A549 (cell line): ENCODE measurements at regions of chr19 and their contacts with region 1.

Region 1: GRCh38 chr19:50414864-50415660 is 3.7 kb upstream of the SPIB start:
- DNase-seq: peak; percentile 86 to 89
- ATAC-seq: peak; percentile 67 to 89
- H3K4me3 ChIP-seq: no peak overlapping the region
- H3K27ac ChIP-seq: no peak overlapping the region
- H3K4me1 ChIP-seq: no peaks in the 10 kb centered on the region
- CTCF ChIP-seq: peak; percentile 82
- EP300 ChIP-seq: no peak
- POLR2A ChIP-seq: no peak
- RAD21 ChIP-seq: peak; percentile 52 to 59; a peak in 4 of 5 replicates

Region 2: DNA sequence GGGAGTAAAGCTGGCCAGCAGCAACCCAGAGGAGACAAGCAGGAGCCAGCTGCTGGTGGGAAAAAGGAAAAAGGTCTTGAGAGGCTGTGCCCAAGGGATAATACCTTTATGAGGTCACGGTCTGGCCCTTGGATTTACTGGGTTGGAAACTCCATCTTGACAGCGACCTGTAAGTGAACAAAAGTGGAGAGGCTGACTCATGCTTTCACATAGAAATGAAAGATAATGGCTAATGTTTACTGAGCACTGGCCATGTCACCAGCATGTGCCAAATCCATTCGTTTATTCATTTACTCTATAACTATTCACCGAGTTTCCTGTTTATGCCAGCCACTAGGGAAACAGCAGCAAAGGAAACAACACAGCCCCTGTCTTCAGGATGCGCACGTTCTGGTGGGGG is 394.6 kb before region 1 on chr19:
- CTCF ChIA-PET with region 1: no interaction called
- POLR2A ChIA-PET with region 1: no interaction called
- DNase-seq: peak in 1 of 2 experiments; percentile 62
- ATAC-seq: no peak
- H3K4me3 ChIP-seq: no peak overlapping the region
- H3K27ac ChIP-seq: no peak overlapping the region
- H3K4me1 ChIP-seq: peaks cover 17% of the 10 kb centered on the region
- CTCF ChIP-seq: no peak
- EP300 ChIP-seq: no peak
- POLR2A ChIP-seq: no peak
- RAD21 ChIP-seq: no peak

Region 3: DNA sequence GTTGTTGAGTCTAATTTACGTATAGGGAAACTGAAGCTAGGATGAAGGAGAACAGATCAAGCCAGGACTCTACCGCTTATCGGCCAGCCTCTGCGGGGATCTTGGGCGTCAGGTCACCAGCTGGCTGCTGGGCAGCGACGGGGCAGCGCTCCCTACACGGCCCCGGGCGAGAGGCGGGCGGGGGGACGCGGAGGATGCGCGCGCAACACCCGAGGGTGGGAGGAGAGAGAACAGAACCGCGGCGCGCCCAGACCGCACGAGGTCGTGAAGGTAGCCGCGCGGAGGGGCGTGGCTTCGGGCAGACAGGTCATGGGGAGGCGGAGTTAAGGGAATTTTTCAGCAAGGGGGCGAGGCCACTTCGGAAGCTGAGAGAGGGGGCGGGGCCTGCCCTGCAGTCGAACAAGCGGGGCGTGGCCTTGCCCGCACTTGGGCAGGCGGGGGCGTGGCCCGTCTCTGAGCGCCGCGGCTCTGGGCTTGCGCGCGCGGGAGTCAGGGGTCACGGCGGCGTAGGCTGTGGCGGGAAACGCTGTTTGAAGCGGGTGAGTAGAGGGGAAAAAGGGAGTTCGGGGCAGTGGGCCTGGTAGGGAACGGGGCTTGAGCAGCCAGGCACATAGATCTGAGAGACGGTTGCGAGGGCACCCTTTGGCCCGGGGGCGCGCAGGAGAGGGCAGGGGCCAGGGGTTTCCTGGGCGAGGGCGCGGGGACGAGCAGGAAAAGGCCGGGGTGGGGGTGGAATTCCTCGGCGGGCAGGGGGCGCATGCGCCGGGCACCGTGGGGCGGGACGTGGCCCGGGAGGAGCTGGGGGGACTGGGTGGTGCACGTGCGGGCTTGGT is 31.0 kb before region 1 on chr19 and contains the start of gene POLD1:
- CTCF ChIA-PET with region 1: interaction called, 10 read pairs
- POLR2A ChIA-PET with region 1: interaction called, 4 read pairs
- DNase-seq: peak; percentile 99
- ATAC-seq: peak; percentile 68 to 88
- H3K4me3 ChIP-seq: peak within 1 kb of the TSS; percentile 67
- H3K27ac ChIP-seq: peak within 1 kb of the TSS; percentile 80 to 93
- H3K4me1 ChIP-seq: peaks cover 15% of the 10 kb centered on the region
- CTCF ChIP-seq: no peak
- EP300 ChIP-seq: no peak
- POLR2A ChIP-seq: peak; percentile 82
- RAD21 ChIP-seq: no peak
- polyA plus RNA-seq, gene POLD1: 24.2 and 26.1 TPM in 2 replicates

Region 4: DNA sequence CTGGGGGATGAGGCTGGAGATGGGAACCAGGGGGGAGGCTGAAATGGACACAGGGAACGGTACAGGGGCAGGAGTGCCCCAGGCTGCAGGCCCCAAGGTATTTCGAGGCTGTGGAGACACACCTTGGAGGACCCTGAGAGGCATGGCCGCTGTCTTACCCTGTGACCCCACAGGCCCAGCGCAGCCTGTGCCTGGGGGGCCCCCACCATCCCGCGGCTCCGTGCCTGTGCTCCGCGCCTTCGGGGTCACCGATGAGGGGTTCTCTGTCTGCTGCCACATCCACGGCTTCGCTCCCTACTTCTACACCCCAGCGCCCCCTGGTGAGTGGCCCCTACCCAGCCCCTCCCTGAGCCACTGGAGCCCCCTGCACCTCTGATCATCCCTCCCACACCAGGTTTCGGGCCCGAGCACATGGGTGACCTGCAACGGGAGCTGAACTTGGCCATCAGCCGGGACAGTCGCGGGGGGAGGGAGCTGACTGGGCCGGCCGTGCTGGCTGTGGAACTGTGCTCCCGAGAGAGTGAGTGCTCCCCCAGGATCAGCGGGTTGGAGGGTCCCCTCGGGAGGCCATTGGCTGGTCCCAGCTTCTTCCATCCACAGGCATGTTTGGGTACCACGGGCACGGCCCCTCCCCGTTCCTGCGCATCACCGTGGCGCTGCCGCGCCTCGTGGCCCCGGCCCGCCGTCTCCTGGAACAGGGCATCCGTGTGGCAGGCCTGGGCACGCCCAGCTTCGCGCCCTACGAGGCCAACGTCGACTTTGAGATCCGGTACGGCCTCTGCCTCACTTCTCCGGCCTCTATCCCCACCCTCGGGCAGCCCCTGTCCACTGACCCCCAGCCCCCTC is 13.2 kb before region 1 on chr19:
- CTCF ChIA-PET with region 1: interaction called, 12 read pairs
- POLR2A ChIA-PET with region 1: no interaction called
- DNase-seq: no peak
- ATAC-seq: no peak
- H3K4me3 ChIP-seq: no peak overlapping the region
- H3K27ac ChIP-seq: no peak overlapping the region
- H3K4me1 ChIP-seq: no peaks in the 10 kb centered on the region
- CTCF ChIP-seq: no peak
- EP300 ChIP-seq: no peak
- POLR2A ChIP-seq: no peak
- RAD21 ChIP-seq: no peak